Pancreas (tissue), 10 donors: ENCODE measurements at regions of chr11 and their contacts with region 1.

Region 1: GRCh38 chr11:123640677-123641494 is 13.5 kb downstream of the SCN3B start:
- DNase-seq: peak in 4 of 6 donors; percentile 46 to 80 (median 62)
- ATAC-seq: peak; percentile 69 to 94 (median 92)
- H3K4me3 ChIP-seq: no peak overlapping the region
- H3K27ac ChIP-seq: no peak overlapping the region
- H3K4me1 ChIP-seq: no peaks in the 10 kb centered on the region
- H3K27me3 ChIP-seq: no peaks in the 10 kb centered on the region
- CTCF ChIP-seq: peak; percentile 46 to 68 (median 58)

Region 2: GRCh38 chr11:123707606-123708205 is 66.8 kb after region 1 on chr11:
- intact Hi-C with region 1: loop called in 1 of 3 experiments (anchors 5 kb)
- DNase-seq: peak in 3 of 6 donors; percentile 28 to 56 (median 35)
- ATAC-seq: peak; percentile 60 to 84 (median 80)
- H3K4me3 ChIP-seq: no peak overlapping the region
- H3K27ac ChIP-seq: no peak overlapping the region
- H3K4me1 ChIP-seq: no peaks in the 10 kb centered on the region
- H3K27me3 ChIP-seq: no peaks in the 10 kb centered on the region
- CTCF ChIP-seq: peak; percentile 17 to 55 (median 36)